MCF 10A (cell line): ENCODE measurements at regions of chr22 and their contacts with region 1.

Region 1: GRCh38 chr22:37566903-37567820 is 6.9 kb downstream of the CDC42EP1 start:
- DNase-seq: peak; percentile 82
- H3K4me3 Mint-ChIP-seq: no peak overlapping the region
- H3K27ac Mint-ChIP-seq: no peak overlapping the region
- H3K4me1 Mint-ChIP-seq: peaks cover 32% of the 10 kb centered on the region
- H3K27me3 Mint-ChIP-seq: no peaks in the 10 kb centered on the region
- CTCF ChIP-seq: peak; percentile 84

Region 2: GRCh38 chr22:37316875-37317371 is 250.2 kb before region 1 on chr22:
- CTCF ChIA-PET with region 1: interaction called, 11 read pairs
- POLR2A ChIA-PET with region 1: interaction called, 3 read pairs
- intact Hi-C with region 1: no loop called
- DNase-seq: peak; percentile 94
- H3K4me3 Mint-ChIP-seq: no peak overlapping the region
- H3K27ac Mint-ChIP-seq: no peak overlapping the region
- H3K4me1 Mint-ChIP-seq: peaks cover 37% of the 10 kb centered on the region
- H3K27me3 Mint-ChIP-seq: no peaks in the 10 kb centered on the region
- CTCF ChIP-seq: peak; percentile 95

Region 3: GRCh38 chr22:37472418-37473006 is 94.7 kb before region 1 on chr22:
- CTCF ChIA-PET with region 1: interaction called, 31 read pairs
- POLR2A ChIA-PET with region 1: no interaction called
- intact Hi-C with region 1: loop called (anchors 10 kb)
- DNase-seq: peak; percentile 57
- H3K4me3 Mint-ChIP-seq: no peak overlapping the region
- H3K27ac Mint-ChIP-seq: no peak overlapping the region
- H3K4me1 Mint-ChIP-seq: no peaks in the 10 kb centered on the region
- H3K27me3 Mint-ChIP-seq: no peaks in the 10 kb centered on the region
- CTCF ChIP-seq: peak; percentile 63

Region 4: GRCh38 chr22:37538590-37539357 is 28.4 kb before region 1 on chr22:
- CTCF ChIA-PET with region 1: interaction called, 667 read pairs
- POLR2A ChIA-PET with region 1: interaction called, 194 read pairs
- intact Hi-C with region 1: no loop called
- DNase-seq: peak; percentile 95
- H3K4me3 Mint-ChIP-seq: no peak overlapping the region
- H3K27ac Mint-ChIP-seq: peak overlapping the region; percentile 34
- H3K4me1 Mint-ChIP-seq: peaks cover 32% of the 10 kb centered on the region
- H3K27me3 Mint-ChIP-seq: no peaks in the 10 kb centered on the region
- CTCF ChIP-seq: peak; percentile 97

Region 5: GRCh38 chr22:37581504-37581903 is 14.3 kb after region 1 on chr22:
- CTCF ChIA-PET with region 1: interaction called, 131 read pairs
- POLR2A ChIA-PET with region 1: interaction called, 3 read pairs
- intact Hi-C with region 1: no loop called
- DNase-seq: no peak
- H3K4me3 Mint-ChIP-seq: no peak overlapping the region
- H3K27ac Mint-ChIP-seq: no peak overlapping the region
- H3K4me1 Mint-ChIP-seq: no peaks in the 10 kb centered on the region
- H3K27me3 Mint-ChIP-seq: no peaks in the 10 kb centered on the region
- CTCF ChIP-seq: no peak